PC-9 (cell line): ENCODE measurements at regions of chr11 and their contacts with region 1.

Region 1: DNA sequence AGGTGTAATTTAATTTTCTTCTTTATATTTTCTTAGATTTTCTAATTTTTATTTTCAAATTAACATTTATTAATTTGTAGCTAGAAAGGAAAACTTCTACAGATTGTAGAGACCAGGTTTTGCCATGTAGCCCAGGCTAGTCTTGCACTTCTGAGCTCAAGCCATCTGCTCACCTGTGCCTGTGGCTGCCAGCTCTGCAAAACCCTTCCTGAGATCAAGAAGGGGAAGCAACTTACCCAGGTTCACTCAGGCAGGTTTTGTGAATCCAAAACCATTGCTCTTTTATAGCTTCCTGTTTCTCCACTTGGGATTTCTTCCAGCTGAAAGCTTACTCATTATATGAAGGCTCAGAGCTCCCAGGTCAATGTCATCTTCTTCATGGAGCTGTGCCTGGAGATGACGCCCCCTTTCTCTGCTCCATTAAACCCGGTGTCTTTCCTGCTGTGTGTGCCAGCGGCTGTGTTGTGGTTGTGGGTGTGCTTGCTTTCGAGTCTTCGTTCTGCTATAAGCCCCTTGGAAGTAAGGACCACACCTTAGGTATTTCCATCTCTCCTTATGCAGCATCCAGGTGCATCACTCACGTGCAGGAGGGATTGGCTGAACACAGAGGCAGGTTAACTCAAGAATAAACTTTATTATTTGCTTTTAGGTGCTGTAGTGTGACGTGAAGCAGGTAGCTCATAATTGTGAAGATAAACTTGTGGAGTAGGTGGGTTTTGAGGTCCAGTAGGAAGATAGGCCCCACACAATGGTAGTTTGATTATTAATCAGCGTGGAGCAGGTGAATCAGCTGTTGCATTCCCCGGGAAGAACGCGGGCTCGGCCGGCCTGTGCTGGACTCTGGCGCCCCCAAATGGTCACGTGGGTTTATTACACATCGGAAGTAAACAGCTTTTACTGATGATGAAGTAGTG is 42.2 kb upstream of the INCENP start:
- DNase-seq: peak; percentile 66 to 82
- H3K4me3 ChIP-seq: no peak overlapping the region
- H3K27ac ChIP-seq: no peak overlapping the region
- H3K4me1 ChIP-seq: no peaks in the 10 kb centered on the region
- H3K27me3 ChIP-seq: no peaks in the 10 kb centered on the region
- CTCF ChIP-seq: peak; percentile 98

Region 2: GRCh38 chr11:61747192-61747966 is 334.3 kb before region 1 on chr11:
- CTCF ChIA-PET with region 1: no interaction called
- POLR2A ChIA-PET with region 1: no interaction called
- intact Hi-C with region 1: loop called (anchors 1 kb)
- DNase-seq: peak; percentile 65 to 86
- H3K4me3 ChIP-seq: no peak overlapping the region
- H3K27ac ChIP-seq: no peak overlapping the region
- H3K4me1 ChIP-seq: peaks cover 18% of the 10 kb centered on the region
- H3K27me3 ChIP-seq: no peaks in the 10 kb centered on the region
- CTCF ChIP-seq: peak; percentile 98

Region 3: DNA sequence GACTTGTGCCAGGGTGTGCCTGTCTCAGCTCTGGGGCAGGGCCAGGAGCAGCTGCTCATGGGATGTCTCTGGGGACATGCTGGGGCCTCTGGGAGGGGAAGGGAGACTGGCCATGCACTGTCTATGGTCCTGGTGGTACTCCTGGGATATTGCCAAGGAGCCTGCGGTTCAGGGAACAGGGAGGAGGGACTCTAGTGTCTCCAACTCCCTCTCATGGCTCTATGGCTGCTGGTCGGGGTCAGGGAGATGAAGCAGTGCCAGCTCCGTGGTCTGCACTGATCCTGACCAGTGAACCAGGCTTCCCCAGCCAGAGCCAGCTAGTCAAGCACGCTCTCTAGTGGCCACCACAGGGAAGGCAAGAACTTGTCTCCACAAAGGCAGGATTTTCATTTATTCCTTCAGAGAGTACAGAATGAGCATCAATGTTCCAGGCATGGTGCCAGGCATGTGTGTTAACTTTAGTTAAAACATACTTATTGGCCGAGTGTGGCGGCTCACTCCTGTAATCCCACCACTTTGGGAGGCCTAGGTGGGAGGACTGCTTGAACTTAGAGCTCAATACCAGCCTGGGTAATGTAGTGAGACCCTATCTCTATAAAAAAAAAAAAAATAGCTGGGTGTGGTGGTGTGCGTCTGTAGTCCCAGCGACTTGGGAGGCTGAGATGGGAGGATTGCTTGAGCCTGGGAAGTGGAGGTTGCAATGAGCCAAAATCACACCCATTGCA is 134.0 kb before region 1 on chr11:
- CTCF ChIA-PET with region 1: interaction called, 13 read pairs
- POLR2A ChIA-PET with region 1: no interaction called
- intact Hi-C with region 1: no loop called
- DNase-seq: peak; percentile 61 to 77
- H3K4me3 ChIP-seq: no peak overlapping the region
- H3K27ac ChIP-seq: no peak overlapping the region
- H3K4me1 ChIP-seq: peaks cover 23% of the 10 kb centered on the region
- H3K27me3 ChIP-seq: no peaks in the 10 kb centered on the region
- CTCF ChIP-seq: peak; percentile 95

Region 4: DNA sequence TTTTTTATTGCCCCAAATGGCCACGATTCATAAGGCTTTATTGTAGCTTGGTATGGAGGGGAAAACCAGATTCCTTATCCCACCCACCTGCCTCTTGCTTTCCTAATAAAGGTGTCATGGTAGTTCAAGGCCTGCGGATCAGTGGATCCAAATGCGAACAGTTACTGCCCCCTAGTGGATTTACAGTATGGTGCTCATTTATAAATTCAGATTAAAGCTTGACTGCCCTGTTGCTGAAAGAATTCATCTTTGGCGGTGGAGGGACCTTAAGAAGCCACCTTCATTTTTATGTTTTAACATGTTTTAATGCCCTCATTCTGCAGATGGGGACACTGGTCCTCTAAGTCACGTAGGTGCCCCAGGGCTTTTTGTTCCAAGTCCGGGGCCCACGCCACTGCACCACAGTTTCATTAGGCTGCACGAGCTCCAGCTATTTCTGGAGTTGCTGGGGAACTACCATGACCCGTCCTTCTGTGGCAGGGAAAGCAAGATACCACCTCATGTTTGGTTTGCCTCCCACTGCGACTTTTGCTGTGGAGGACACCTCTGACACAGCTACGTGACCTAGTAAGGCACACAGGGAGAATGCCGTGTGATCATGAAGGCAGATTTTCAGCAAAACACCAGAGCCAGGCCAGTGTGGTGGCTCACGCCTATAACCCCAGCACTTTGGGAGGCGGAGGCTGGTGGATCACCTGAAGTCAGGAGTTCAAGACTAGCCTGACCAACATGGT is 26.5 kb after region 1 on chr11:
- CTCF ChIA-PET with region 1: interaction called, 15 read pairs
- POLR2A ChIA-PET with region 1: interaction called, 3 read pairs
- intact Hi-C with region 1: no loop called
- DNase-seq: peak; percentile 44 to 53
- H3K4me3 ChIP-seq: no peak overlapping the region
- H3K27ac ChIP-seq: no peak overlapping the region
- H3K4me1 ChIP-seq: no peaks in the 10 kb centered on the region
- H3K27me3 ChIP-seq: no peaks in the 10 kb centered on the region
- CTCF ChIP-seq: peak; percentile 93

Region 5: DNA sequence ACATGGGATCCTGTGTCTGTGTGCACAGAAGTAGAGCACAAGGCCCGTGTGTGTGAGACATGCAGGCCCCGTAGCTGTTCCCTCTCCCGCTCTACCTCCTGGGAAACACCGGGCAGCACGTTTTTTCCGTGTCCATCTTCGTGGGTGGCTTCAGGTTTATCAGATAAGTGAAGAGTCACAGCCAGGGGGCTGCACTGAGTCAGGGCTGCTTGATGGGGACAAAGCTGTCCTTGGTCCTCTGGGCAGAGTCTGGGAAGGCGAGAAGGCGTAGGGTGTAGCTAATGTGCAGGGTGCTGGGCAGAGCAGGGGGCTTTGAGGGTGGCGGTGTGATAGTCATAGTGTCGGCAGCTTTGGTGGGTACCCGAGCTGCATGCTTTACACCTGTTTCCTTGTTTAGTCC is 65.9 kb after region 1 on chr11:
- CTCF ChIA-PET with region 1: no interaction called
- POLR2A ChIA-PET with region 1: no interaction called
- intact Hi-C with region 1: no loop called
- DNase-seq: no peak
- H3K4me3 ChIP-seq: no peak overlapping the region
- H3K27ac ChIP-seq: no peak overlapping the region
- H3K4me1 ChIP-seq: no peaks in the 10 kb centered on the region
- H3K27me3 ChIP-seq: no peaks in the 10 kb centered on the region
- CTCF ChIP-seq: no peak